ENCODE measurements at regions of chr21 and their contacts with region 1.

Region 1: DNA sequence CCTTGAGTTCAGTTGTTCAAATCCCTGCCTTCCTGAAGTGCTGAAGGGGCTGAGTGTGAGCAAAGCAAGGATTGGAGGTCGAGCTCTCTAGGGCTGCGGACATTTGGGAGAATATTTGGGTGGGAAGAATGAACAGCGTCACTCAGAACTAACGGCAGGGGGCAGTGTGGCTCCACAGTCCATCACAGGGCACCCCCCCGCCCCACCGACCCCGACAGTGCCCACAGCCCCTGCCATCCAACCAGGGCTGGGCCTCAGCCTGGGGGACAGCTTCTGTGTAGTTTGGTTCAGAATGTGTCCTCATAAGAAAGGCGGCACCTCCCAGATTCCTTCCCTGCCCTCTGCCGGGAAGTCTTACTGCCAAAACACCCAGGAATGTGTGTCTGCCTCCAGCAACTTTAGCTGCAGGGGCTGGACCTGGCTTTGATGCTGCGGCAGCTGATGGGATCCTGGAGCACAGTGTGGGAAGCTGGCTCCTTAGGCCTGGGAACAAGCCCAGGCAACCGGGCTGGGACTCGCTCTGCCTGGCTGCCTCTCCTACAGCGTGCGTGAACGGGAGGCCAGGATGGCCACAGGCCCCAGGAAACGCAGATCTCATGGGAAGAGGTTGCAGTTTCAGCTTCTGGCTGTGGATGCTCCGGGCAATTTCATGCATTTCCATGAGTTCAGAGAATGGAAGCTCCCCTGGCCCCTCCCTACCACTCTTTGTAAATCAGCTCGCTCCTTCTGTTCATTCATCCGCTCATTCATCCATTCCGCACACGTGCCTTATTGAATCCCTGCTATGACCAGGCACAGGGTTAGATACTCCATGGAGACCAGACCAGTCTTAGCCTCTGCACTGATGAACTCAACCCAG is 104.9 kb upstream of the TMPRSS2 start:
- DNase-seq: peak in 1 of 2 experiments; percentile 88
- H3K4me3 ChIP-seq: peak overlapping the region in 1 of 4 experiments; percentile 6; a peak in 1 of 8 replicates
- H3K27ac ChIP-seq: 0 out of 2 replicates have a peak overlapping the region, but pooled peaks have one; percentile 16
- H3K4me1 ChIP-seq: peaks cover 0 to 13% (median 10%) of the 10 kb centered on the region in 4 experiments; a peak in 5 of 7 replicates
- H3K27me3 ChIP-seq: peaks cover 0 to 2% (median under 1%) of the 10 kb centered on the region in 4 experiments; a peak in 1 of 7 replicates
- CTCF ChIP-seq: peak; percentile 66 to 82 (median 82)
- EP300 ChIP-seq: no peak
- POLR2A ChIP-seq: no peak
- RAD21 ChIP-seq: peak; percentile 86 to 87

Region 2: DNA sequence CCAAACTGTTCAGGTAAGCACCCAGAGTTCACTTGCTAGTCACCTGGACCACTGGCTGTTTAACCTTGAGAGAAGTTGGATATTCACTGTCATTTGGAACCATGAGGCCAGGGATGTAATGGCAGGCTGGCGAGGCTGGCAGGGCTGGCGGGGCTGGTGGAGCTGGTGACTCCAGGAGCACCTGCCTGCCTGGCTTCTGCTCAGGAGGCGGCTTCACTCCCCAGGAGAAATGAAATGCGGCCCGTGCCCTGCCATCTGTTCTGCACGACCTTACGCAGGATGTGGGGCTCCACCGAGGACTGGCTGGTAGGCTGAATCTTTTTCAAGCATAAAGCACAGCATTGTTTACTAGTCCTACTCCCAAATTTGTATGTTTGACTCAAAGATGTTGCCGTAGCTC is 209.6 kb before region 1 on chr21:
- CTCF ChIA-PET with region 1: no interaction called
- POLR2A ChIA-PET with region 1: no interaction called
- DNase-seq: no peak
- H3K4me3 ChIP-seq: no peak overlapping the region
- H3K27ac ChIP-seq: no peak overlapping the region
- H3K4me1 ChIP-seq: no peaks in the 10 kb centered on the region
- H3K27me3 ChIP-seq: no peaks in the 10 kb centered on the region
- CTCF ChIP-seq: no peak
- EP300 ChIP-seq: no peak
- POLR2A ChIP-seq: no peak
- RAD21 ChIP-seq: no peak

Region 3: GRCh38 chr21:41425954-41426675 is 186.8 kb before region 1 on chr21 and contains the start of gene MX1:
- CTCF ChIA-PET with region 1: interaction called, 10 read pairs
- POLR2A ChIA-PET with region 1: no interaction called
- DNase-seq: peak in 1 of 2 experiments; percentile 60
- H3K4me3 ChIP-seq: peak within 1 kb of the TSS; percentile 24 to 66 (median 58)
- H3K27ac ChIP-seq: no peak within 1 kb of the TSS
- H3K4me1 ChIP-seq: 0 out of 7 replicates have a peak, but pooled peaks cover 0 to 3% (median 1%) of the 10 kb centered on the region in 4 experiments
- H3K27me3 ChIP-seq: peaks cover 5 to 33% (median 24%) of the 10 kb centered on the region in 4 experiments
- CTCF ChIP-seq: no peak
- EP300 ChIP-seq: no peak
- POLR2A ChIP-seq: peak in 1 of 2 experiments; percentile 50; a peak in 1 of 3 replicates
- RAD21 ChIP-seq: no peak
- total RNA-seq, gene MX1: 3.1 and 3.8 TPM in 2 replicates

Region 4: DNA sequence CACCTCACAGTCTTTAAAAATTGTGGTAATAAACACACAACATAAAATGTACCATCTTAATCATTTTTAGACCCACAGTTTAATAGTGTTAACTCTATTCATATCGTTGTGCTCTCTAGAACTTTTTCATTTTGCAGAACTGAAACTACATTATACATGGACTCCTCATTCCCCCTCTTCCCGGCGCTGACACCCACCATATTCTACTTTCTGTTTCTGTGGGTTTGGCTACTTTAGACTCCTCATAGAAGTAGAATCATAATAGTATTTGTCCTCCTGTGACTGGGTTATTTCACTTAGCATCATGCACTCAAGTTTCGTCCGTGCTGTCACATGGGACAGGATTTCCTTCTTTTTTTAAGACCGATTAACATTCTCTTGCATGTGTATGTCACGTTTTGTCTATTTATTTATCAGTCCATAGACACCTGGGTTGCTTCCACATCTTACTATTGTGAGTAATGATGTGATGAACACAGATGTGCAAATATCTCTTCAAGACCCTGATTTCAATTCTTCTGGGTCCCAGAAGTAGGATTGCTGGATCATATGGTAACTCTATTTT is 42.0 kb before region 1 on chr21:
- CTCF ChIA-PET with region 1: no interaction called
- POLR2A ChIA-PET with region 1: no interaction called
- DNase-seq: no peak
- H3K4me3 ChIP-seq: no peak overlapping the region
- H3K27ac ChIP-seq: no peak overlapping the region
- H3K4me1 ChIP-seq: no peaks in the 10 kb centered on the region
- H3K27me3 ChIP-seq: peaks cover 0 to 2% (median 0%) of the 10 kb centered on the region in 4 experiments; a peak in 2 of 7 replicates
- CTCF ChIP-seq: no peak
- EP300 ChIP-seq: no peak
- POLR2A ChIP-seq: no peak
- RAD21 ChIP-seq: no peak

Region 5: GRCh38 chr21:41630249-41630648 is 17.3 kb after region 1 on chr21:
- CTCF ChIA-PET with region 1: interaction called, 55 read pairs
- POLR2A ChIA-PET with region 1: interaction called, 3 read pairs
- DNase-seq: no peak
- H3K4me3 ChIP-seq: no peak overlapping the region
- H3K27ac ChIP-seq: no peak overlapping the region
- H3K4me1 ChIP-seq: peaks cover 0 to 2% (median 0%) of the 10 kb centered on the region in 4 experiments; a peak in 1 of 7 replicates
- H3K27me3 ChIP-seq: no peaks in the 10 kb centered on the region
- CTCF ChIP-seq: no peak
- EP300 ChIP-seq: no peak
- POLR2A ChIP-seq: no peak
- RAD21 ChIP-seq: no peak

Region 6: GRCh38 chr21:41695513-41695912 is 82.6 kb after region 1 on chr21:
- CTCF ChIA-PET with region 1: interaction called, 17 read pairs
- POLR2A ChIA-PET with region 1: no interaction called
- DNase-seq: no peak
- H3K4me3 ChIP-seq: no peak overlapping the region
- H3K27ac ChIP-seq: no peak overlapping the region
- H3K4me1 ChIP-seq: no peaks in the 10 kb centered on the region
- H3K27me3 ChIP-seq: peaks cover 0 to 4% (median 0%) of the 10 kb centered on the region in 4 experiments; a peak in 1 of 7 replicates
- CTCF ChIP-seq: no peak
- EP300 ChIP-seq: no peak
- POLR2A ChIP-seq: no peak
- RAD21 ChIP-seq: no peak

Region 7: GRCh38 chr21:41768437-41769061 is 155.6 kb after region 1 on chr21:
- CTCF ChIA-PET with region 1: interaction called, 82 read pairs
- POLR2A ChIA-PET with region 1: interaction called, 3 read pairs
- DNase-seq: no peak
- H3K4me3 ChIP-seq: peak overlapping the region; percentile 19 to 73 (median 36); a peak in 7 of 8 replicates
- H3K27ac ChIP-seq: no peak overlapping the region
- H3K4me1 ChIP-seq: peaks cover 12 to 36% (median 29%) of the 10 kb centered on the region in 4 experiments
- H3K27me3 ChIP-seq: peaks cover 33 to 86% (median 77%) of the 10 kb centered on the region in 4 experiments
- CTCF ChIP-seq: peak in 2 of 3 experiments; percentile 6 to 13; a peak in 3 of 4 replicates
- EP300 ChIP-seq: peak in 1 of 2 experiments; percentile 9; a peak in 1 of 3 replicates
- POLR2A ChIP-seq: no peak
- RAD21 ChIP-seq: peak in 1 of 2 experiments; percentile 24; a peak in 1 of 4 replicates

Region 8: GRCh38 chr21:41809891-41810596 is 197.1 kb after region 1 on chr21:
- CTCF ChIA-PET with region 1: interaction called, 132 read pairs
- POLR2A ChIA-PET with region 1: no interaction called
- DNase-seq: no peak
- H3K4me3 ChIP-seq: no peak overlapping the region
- H3K27ac ChIP-seq: no peak overlapping the region
- H3K4me1 ChIP-seq: no peaks in the 10 kb centered on the region
- H3K27me3 ChIP-seq: no peaks in the 10 kb centered on the region
- CTCF ChIP-seq: no peak
- EP300 ChIP-seq: no peak
- POLR2A ChIP-seq: no peak
- RAD21 ChIP-seq: no peak

Region 9: GRCh38 chr21:41865002-41865777 is 252.3 kb after region 1 on chr21:
- CTCF ChIA-PET with region 1: interaction called, 10 read pairs
- POLR2A ChIA-PET with region 1: no interaction called
- DNase-seq: no peak
- H3K4me3 ChIP-seq: no peak overlapping the region
- H3K27ac ChIP-seq: no peak overlapping the region
- H3K4me1 ChIP-seq: peaks cover 0 to 3% (median 0%) of the 10 kb centered on the region in 4 experiments; a peak in 2 of 7 replicates
- H3K27me3 ChIP-seq: no peaks in the 10 kb centered on the region
- CTCF ChIP-seq: no peak
- EP300 ChIP-seq: no peak
- POLR2A ChIP-seq: no peak
- RAD21 ChIP-seq: no peak